Naive thymus-derived CD4-positive, alpha-beta T cell (primary cell): ENCODE measurements at regions of chr7 and their contacts with region 1.

Region 1: GRCh38 chr7:139620676-139621344 is 97.3 kb downstream of the CLEC2L start:
- DNase-seq: peak in 8 of 9 donors; percentile 27 to 58 (median 54)
- ATAC-seq: peak; percentile 86
- H3K4me3 ChIP-seq: no peak overlapping the region
- H3K4me3 Mint-ChIP-seq: peak overlapping the region in 1 of 10 donors; percentile 10
- H3K27ac ChIP-seq: no peak overlapping the region
- H3K27ac Mint-ChIP-seq: peak overlapping the region in 6 of 9 donors; percentile 0 to 82 (median 42)
- H3K4me1 ChIP-seq: peaks cover 0 to 8% of the 10 kb centered on the region in 2 donors
- H3K4me1 Mint-ChIP-seq: peaks cover 16 to 47% (median 36%) of the 10 kb centered on the region in 7 donors
- H3K27me3 ChIP-seq: no peaks in the 10 kb centered on the region
- H3K27me3 Mint-ChIP-seq: no peaks in the 10 kb centered on the region

Region 2: GRCh38 chr7:139431010-139431409 is 189.8 kb before region 1 on chr7:
- CTCF ChIA-PET with region 1: no interaction called
- POLR2A ChIA-PET with region 1: no interaction called
- intact Hi-C with region 1: loop called in 1 of 2 experiments (anchors 1 kb)
- DNase-seq: no peak
- ATAC-seq: no peak
- H3K4me3 ChIP-seq: no peak overlapping the region
- H3K4me3 Mint-ChIP-seq: no peak overlapping the region
- H3K27ac ChIP-seq: no peak overlapping the region
- H3K27ac Mint-ChIP-seq: no peak overlapping the region
- H3K4me1 ChIP-seq: peaks cover 0 to 3% of the 10 kb centered on the region in 2 donors
- H3K4me1 Mint-ChIP-seq: peaks cover 6 to 18% (median 12%) of the 10 kb centered on the region in 7 donors
- H3K27me3 ChIP-seq: no peaks in the 10 kb centered on the region
- H3K27me3 Mint-ChIP-seq: no peaks in the 10 kb centered on the region

Region 3: GRCh38 chr7:139602143-139602722 is 18.6 kb before region 1 on chr7:
- CTCF ChIA-PET with region 1: interaction called, 8 read pairs
- POLR2A ChIA-PET with region 1: no interaction called
- intact Hi-C with region 1: loop called (anchors 1 kb)
- DNase-seq: peak in 6 of 9 donors; percentile 16 to 46 (median 44)
- ATAC-seq: peak; percentile 73
- H3K4me3 ChIP-seq: no peak overlapping the region
- H3K4me3 Mint-ChIP-seq: no peak overlapping the region
- H3K27ac ChIP-seq: no peak overlapping the region
- H3K27ac Mint-ChIP-seq: no peak overlapping the region
- H3K4me1 ChIP-seq: no peaks in the 10 kb centered on the region
- H3K4me1 Mint-ChIP-seq: peaks cover 0 to 3% (median 0%) of the 10 kb centered on the region in 7 donors
- H3K27me3 ChIP-seq: no peaks in the 10 kb centered on the region
- H3K27me3 Mint-ChIP-seq: no peaks in the 10 kb centered on the region

Region 4: DNA sequence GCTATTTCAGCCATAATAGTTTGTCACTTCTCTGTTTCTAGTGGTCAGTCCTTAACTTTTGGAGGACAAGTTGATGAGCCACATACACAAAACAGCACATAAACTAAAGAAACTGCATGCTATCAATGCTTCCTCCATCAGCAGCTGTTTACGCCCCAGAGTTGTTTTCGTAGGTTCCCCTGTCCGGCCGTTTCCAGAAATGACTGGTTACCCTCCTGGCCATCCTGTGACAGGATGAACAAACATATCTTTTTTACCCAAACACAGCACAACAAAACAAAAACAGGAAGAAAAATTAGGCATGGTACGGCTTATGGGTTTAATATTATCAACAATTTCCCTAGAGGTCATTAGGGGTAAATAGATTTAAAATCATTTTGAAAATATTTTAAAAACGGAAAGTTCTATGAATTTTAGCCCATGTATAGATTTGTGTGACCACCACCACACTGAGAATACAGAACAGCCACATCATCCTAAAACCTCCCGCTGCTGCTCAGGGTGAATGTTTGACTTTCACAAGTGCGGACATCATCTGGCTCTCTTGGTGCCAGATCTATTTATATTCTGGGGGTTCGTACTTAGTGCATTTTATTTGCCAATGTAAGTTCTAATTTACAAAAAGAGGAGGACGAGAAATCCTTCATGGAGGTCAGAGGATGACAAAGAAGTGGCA is 82.1 kb after region 1 on chr7:
- CTCF ChIA-PET with region 1: no interaction called
- POLR2A ChIA-PET with region 1: no interaction called
- intact Hi-C with region 1: no loop called
- DNase-seq: no peak
- ATAC-seq: peak; percentile 29
- H3K4me3 ChIP-seq: no peak overlapping the region
- H3K4me3 Mint-ChIP-seq: no peak overlapping the region
- H3K27ac ChIP-seq: no peak overlapping the region
- H3K27ac Mint-ChIP-seq: no peak overlapping the region
- H3K4me1 ChIP-seq: no peaks in the 10 kb centered on the region
- H3K4me1 Mint-ChIP-seq: peaks cover 13 to 42% (median 25%) of the 10 kb centered on the region in 7 donors
- H3K27me3 ChIP-seq: no peaks in the 10 kb centered on the region
- H3K27me3 Mint-ChIP-seq: no peaks in the 10 kb centered on the region

Region 5: GRCh38 chr7:139829025-139829774 is 208.4 kb after region 1 on chr7 and contains the start of gene TBXAS1:
- CTCF ChIA-PET with region 1: interaction called, 7 read pairs
- POLR2A ChIA-PET with region 1: no interaction called
- intact Hi-C with region 1: loop called in 1 of 2 experiments (anchors 1 kb)
- DNase-seq: peak in 3 of 9 donors; percentile 6 to 14 (median 12)
- ATAC-seq: peak; percentile 87
- H3K4me3 ChIP-seq: no peak within 1 kb of the TSS
- H3K4me3 Mint-ChIP-seq: peak within 1 kb of the TSS; percentile 19 to 78 (median 68)
- H3K27ac ChIP-seq: no peak within 1 kb of the TSS
- H3K27ac Mint-ChIP-seq: peak within 1 kb of the TSS in 8 of 9 donors; percentile 67 to 90 (median 83)
- H3K4me1 ChIP-seq: peaks cover 0 to 8% of the 10 kb centered on the region in 2 donors
- H3K4me1 Mint-ChIP-seq: peaks cover 10 to 30% (median 26%) of the 10 kb centered on the region in 7 donors
- H3K27me3 ChIP-seq: no peaks in the 10 kb centered on the region
- H3K27me3 Mint-ChIP-seq: peaks cover 0 to 16% (median 5%) of the 10 kb centered on the region in 5 donors
- total RNA-seq, gene TBXAS1: 2.6 to 70.9 (median 6.7) TPM

Region 6: DNA sequence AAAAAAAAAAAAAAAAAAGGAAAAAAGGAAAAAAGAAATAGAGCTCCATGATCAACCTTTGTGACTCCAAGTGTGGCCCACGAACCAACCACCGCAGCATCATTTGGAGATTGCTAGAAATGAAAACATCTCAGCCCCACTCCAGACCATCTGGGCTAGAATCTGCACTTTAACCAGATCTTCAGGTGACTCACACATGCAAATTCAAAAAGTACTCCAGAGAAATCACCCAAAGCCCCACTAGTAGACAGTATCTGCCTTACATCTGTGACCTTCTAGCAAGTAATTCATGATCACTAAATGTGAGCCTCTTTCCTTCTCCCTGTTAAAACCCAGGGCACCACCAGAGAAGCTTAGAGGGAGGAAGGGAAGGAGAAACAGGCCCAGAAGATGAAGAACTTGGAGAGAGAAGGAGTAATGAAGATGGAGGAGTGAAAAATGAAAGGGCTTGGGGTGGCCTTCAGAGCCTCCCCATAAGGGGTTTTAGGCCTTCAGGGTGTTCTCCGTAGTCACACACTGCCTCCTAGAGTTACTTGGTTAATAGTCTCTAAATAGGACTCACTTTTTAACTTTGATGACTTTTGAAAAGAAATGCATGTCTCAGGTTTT is 683.5 kb after region 1 on chr7:
- CTCF ChIA-PET with region 1: interaction called, 4 read pairs
- POLR2A ChIA-PET with region 1: no interaction called
- intact Hi-C with region 1: loop called in 1 of 2 experiments (anchors 1 kb)
- DNase-seq: peak in 8 of 9 donors; percentile 30 to 75 (median 58)
- ATAC-seq: peak; percentile 93
- H3K4me3 ChIP-seq: no peak overlapping the region
- H3K4me3 Mint-ChIP-seq: peak overlapping the region in 1 of 10 donors; percentile 12
- H3K27ac ChIP-seq: no peak overlapping the region
- H3K27ac Mint-ChIP-seq: peak overlapping the region; percentile 3 to 81 (median 62)
- H3K4me1 ChIP-seq: no peaks in the 10 kb centered on the region
- H3K4me1 Mint-ChIP-seq: peaks cover 0 to 7% (median 6%) of the 10 kb centered on the region in 7 donors
- H3K27me3 ChIP-seq: no peaks in the 10 kb centered on the region
- H3K27me3 Mint-ChIP-seq: no peaks in the 10 kb centered on the region